Ovary (tissue), 10 donors: ENCODE measurements at regions of chr10 and their contacts with region 1.

Region 1: DNA sequence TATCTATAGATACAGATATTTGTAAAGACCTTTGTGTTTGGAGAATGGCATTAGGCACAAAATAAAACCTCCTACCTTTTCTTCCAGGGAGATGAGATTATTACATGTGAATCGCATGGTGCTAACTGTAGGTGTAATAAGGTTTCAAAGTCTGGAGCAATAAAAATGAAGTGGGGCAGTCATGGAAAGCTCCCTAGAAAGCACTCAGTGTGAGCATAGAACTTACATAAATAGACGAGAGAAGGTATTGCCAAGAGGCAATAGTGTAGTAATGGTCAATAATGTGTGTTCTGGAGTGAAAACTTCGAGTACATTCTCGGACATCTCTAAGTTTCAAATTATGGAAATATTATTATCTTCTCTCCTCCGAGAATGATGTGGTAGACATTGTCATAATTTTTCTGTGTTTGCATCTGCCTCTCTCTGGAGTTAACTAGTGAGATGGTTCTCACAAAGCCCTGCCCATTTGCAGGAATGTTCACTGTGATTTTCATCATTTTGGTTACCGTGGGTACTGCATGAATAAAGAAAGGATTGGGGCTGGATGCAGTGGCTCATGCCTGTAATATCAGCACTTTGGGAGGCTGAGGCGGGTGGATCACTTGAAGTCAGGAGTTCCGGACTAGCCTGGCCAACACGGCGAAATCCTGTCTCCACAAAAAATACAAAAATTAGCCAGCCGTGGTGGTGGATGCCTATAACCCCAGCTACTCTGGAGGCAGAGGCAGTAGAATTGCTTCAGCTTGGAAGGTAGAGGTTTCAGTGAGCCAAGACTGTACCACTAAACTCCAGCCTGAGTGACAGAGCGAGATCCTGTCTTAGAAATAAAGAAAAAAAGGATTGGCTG is 10.6 kb downstream of the VIM start:
- DNase-seq: peak in 1 of 5 donors; percentile 46
- H3K4me3 ChIP-seq: no peak overlapping the region
- H3K27ac ChIP-seq: peak overlapping the region in 1 of 2 donors; percentile 41
- H3K4me1 ChIP-seq: peaks cover 9% of the 10 kb centered on the region
- H3K27me3 ChIP-seq: no peaks in the 10 kb centered on the region
- CTCF ChIP-seq: peak in 1 of 3 donors; percentile 19
- EP300 ChIP-seq: no peak
- POLR2A ChIP-seq: no peak

Region 2: DNA sequence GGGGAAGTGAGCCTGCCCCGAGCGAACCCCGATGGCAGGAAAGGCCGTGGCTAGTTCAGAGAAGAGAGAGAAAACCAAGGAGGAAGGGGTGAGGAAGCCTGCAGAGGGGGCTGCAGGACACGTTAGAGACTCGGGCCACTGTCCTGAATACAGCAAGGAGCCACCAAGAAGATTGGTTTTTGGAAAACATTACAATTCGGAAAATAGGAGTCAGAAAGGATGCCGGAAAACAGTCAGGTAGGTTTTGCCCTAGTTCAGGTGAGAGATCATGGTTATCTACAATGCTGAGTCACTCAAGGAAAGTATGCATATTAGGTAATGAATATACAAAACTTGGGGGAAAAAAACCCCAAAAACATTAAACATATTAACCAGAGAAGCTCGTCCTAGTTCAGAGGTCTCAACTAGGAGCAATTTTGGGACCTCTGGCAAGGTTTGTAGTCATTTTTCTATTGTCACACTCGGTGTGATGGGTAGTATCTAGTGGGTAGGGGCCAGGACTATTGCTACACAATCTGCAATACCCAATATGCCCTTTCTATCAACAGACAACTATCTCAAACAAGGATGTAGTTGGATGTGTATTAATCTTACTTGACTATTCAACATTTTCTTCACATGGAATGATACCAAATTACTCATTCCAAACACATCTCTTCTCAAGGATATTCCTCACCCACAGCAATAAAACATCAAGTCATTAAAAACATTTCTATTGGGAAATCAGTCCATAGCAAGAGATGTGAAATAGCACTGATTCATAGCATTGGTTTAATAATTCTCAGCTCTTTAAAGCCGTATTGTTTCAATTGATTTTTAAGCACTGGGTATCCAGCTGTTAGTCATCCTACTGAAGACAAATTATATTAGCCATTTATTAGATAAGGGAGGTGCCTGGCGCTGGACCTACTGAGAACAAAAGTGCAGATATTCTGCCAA is 347.0 kb before region 1 on chr10:
- intact Hi-C with region 1: loop called in 1 of 4 experiments (anchors 5 kb)
- DNase-seq: peak in 4 of 5 donors; percentile 64 to 84 (median 72)
- H3K4me3 ChIP-seq: no peak overlapping the region
- H3K27ac ChIP-seq: peak overlapping the region in 1 of 2 donors; percentile 7
- H3K4me1 ChIP-seq: no peaks in the 10 kb centered on the region
- H3K27me3 ChIP-seq: no peaks in the 10 kb centered on the region
- CTCF ChIP-seq: peak in 2 of 3 donors; percentile 50 to 59
- EP300 ChIP-seq: no peak
- POLR2A ChIP-seq: no peak